Activated naive CD4-positive, alpha-beta T cell treated with anti-CD3 and anti-CD28 coated beads for 36 hours (primary cell): ENCODE measurements at regions of chr6 and their contacts with region 1.

Region 1: DNA sequence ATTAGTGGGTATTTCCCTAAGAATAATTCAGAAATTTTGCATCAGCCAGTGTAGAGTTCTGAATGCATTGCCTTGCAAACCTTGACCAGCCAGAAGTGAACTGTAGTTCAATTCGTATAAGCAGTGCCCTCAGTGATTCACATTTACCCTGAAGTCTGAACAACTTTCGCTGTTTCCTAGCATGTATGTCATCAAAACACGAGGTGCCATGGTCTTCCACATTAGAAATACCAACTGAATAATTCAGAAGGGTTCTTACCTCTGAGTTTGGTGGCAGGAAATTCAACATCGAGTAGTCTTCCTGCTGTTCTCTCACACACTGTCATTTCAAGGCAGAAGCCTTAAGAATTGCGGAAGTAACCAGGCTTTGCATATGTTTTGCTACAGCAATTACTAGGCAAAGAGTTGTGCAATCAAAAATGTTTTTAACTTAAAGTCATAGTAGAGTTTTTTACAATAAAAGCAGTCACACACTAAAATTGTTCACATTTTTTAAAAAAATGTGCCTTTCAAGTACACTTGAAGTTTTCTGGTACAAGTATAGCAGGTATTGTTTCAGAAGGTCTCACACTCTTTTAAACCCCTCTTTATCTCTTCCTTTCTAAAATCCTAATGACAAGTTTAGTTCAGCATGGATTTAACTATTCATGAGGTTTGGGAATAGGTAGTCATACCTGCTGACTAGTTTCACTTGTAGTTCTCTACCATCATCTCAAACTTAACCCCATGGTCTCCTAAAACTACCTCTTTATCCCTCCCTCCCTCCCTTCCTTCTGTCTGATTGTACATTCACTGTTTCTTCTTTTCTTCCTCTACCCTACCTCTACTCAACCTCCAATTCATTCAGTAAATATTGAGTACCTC is 118.3 kb downstream of the STXBP5 start:
- DNase-seq: peak; percentile 60
- H3K4me3 Mint-ChIP-seq: peak overlapping the region; percentile 71
- H3K27ac Mint-ChIP-seq: peak overlapping the region; percentile 92
- H3K4me1 Mint-ChIP-seq: peaks cover 19% of the 10 kb centered on the region
- H3K27me3 Mint-ChIP-seq: no peaks in the 10 kb centered on the region

Region 2: GRCh38 chr6:145734486-145735355 is 1587.8 kb before region 1 on chr6:
- CTCF ChIA-PET with region 1: no interaction called
- intact Hi-C with region 1: loop called (anchors 1 kb)
- DNase-seq: peak; percentile 75
- H3K4me3 Mint-ChIP-seq: peak overlapping the region; percentile 94
- H3K27ac Mint-ChIP-seq: peak overlapping the region; percentile 97
- H3K4me1 Mint-ChIP-seq: peaks cover 21% of the 10 kb centered on the region
- H3K27me3 Mint-ChIP-seq: no peaks in the 10 kb centered on the region

Region 3: GRCh38 chr6:146950351-146950835 is 372.1 kb before region 1 on chr6:
- CTCF ChIA-PET with region 1: interaction called, 3 read pairs
- intact Hi-C with region 1: loop called (anchors 1 kb)
- DNase-seq: peak; percentile 65
- H3K4me3 Mint-ChIP-seq: no peak overlapping the region
- H3K27ac Mint-ChIP-seq: peak overlapping the region; percentile 88
- H3K4me1 Mint-ChIP-seq: peaks cover 17% of the 10 kb centered on the region
- H3K27me3 Mint-ChIP-seq: no peaks in the 10 kb centered on the region

Region 4: GRCh38 chr6:147063469-147064031 is 259.0 kb before region 1 on chr6:
- CTCF ChIA-PET with region 1: no interaction called
- intact Hi-C with region 1: no loop called
- DNase-seq: no peak
- H3K4me3 Mint-ChIP-seq: no peak overlapping the region
- H3K27ac Mint-ChIP-seq: no peak overlapping the region
- H3K4me1 Mint-ChIP-seq: peaks cover 6% of the 10 kb centered on the region
- H3K27me3 Mint-ChIP-seq: no peaks in the 10 kb centered on the region

Region 5: DNA sequence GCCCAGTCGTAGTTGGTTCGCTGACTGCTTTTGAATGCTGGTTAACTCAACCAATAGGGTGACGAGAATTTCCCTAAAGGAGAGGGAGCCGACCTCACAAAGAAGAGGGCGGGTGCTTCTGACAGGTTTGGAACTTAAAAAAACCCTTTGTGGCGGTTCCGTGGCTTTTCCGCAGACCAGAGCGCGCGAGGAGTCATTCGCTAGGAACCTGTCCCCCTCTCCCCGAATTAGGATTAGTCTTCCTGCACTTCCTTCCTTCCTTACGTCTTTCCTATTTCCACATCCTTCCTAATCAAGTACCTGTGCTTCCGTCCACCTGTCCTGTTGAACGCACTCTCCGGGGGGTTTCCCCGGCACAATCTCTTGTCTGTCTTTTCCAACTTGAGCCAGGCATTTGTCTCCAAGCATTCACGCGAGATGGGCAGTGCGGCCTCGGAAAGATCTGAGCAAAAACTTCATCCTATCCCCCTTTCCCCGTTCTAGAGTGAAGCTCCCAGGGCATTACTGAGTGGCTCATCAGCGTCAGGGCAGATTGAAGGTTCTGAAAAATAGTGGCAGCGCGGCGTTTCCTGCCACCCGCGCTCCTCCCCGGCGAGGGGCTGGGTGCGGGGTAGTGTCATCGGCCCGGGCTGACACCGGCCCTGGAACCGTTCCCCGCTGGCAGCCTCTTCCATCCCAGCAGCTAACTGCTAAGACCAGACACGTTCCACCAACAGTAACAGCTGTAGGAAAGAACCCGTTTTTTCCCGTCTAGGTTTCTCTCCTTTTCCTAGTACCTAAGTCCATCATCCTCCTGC is 119.8 kb before region 1 on chr6:
- CTCF ChIA-PET with region 1: no interaction called
- intact Hi-C with region 1: loop called (anchors 1 kb)
- DNase-seq: peak; percentile 88
- H3K4me3 Mint-ChIP-seq: peak overlapping the region; percentile 83
- H3K27ac Mint-ChIP-seq: peak overlapping the region; percentile 99
- H3K4me1 Mint-ChIP-seq: peaks cover 20% of the 10 kb centered on the region
- H3K27me3 Mint-ChIP-seq: no peaks in the 10 kb centered on the region

Region 6: DNA sequence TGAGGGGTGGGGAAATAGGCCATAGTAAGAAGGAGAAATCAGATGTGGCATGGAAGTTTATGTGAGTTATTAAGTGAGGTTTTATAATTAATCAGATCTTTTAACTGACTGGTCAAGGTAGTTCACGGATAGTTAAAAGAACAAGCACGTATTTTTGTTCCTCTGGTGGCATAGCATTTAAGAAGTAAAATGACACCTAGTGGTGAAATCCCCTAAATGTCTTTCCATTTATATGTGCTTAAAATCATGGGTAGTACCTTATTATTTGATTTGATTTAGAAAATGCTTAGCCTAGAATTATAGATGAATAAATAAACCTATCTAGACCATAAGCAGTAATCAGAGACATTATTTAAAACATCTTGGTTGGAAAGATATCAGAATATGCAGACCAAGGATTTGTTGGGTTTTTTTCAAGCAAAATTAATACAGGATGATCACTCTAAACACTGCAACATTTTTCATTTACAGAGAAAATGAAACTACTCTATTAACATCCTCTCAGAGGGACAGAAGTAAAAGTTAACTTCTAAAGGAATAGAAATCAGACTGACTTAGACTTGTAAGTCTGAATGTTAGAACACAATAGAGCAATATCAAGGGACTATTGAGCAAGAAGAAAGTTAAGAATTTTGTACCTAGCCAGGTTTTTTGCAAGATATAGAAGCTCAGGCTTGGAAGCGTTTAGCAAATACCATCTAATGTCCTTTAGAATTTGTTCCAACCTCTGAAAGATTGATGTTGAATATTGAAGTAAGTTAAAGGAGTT is 37.3 kb before region 1 on chr6:
- CTCF ChIA-PET with region 1: no interaction called
- intact Hi-C with region 1: loop called (anchors 1 kb)
- DNase-seq: no peak
- H3K4me3 Mint-ChIP-seq: no peak overlapping the region
- H3K27ac Mint-ChIP-seq: no peak overlapping the region
- H3K4me1 Mint-ChIP-seq: peaks cover 34% of the 10 kb centered on the region
- H3K27me3 Mint-ChIP-seq: no peaks in the 10 kb centered on the region

Region 7: GRCh38 chr6:148203970-148204369 is 881.4 kb after region 1 on chr6:
- CTCF ChIA-PET with region 1: no interaction called
- intact Hi-C with region 1: loop called (anchors 1 kb)
- DNase-seq: peak; percentile 87
- H3K4me3 Mint-ChIP-seq: peak overlapping the region; percentile 48
- H3K27ac Mint-ChIP-seq: peak overlapping the region; percentile 85
- H3K4me1 Mint-ChIP-seq: peaks cover 50% of the 10 kb centered on the region
- H3K27me3 Mint-ChIP-seq: peaks cover 72% of the 10 kb centered on the region

Region 8: DNA sequence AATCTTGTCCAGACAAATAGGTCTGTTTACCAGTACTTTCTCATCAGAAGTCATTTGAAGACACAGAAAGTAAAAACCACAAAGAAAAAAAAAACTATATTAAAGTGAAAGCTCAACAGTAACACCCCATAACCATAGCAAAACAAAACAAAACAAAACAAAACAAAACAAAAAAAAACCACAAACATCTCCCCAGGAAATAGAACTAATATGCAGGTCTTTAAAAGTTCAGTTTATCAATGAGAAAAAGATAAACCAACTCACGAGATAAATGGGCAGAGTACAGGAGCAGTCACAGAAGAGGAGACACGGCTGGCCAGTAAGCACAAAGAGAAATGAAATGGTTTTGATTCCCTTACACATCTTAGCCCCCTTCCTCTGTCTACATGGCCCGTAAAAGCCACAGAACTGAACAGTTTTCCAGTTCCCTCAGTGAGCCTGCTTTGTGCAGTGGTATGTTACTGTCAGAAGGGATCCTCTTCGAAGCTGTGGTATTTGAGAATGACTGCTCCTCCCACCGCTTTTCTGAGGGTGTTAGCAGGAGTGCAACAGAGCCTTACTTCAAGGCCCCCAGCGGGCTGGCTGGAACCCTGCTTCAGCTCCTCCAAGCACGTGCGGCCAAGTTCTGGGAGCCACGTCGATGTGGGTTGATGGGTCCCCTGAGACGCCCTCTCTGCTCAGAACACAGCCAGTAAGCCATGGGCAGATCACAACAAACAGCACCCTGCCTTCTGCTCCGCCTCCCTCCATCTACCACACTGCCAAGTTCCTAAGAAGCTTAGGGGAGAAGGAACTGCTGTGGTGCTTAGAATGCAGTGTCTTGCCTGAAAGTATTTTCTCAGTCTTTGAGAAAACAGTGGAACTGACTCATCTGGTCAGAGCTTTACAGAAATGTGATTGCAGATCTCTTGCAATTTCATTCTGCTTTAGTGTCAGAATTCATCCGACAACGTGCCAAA is 1438.3 kb after region 1 on chr6:
- CTCF ChIA-PET with region 1: no interaction called
- intact Hi-C with region 1: loop called (anchors 2 kb)
- DNase-seq: peak; percentile 41
- H3K4me3 Mint-ChIP-seq: peak overlapping the region; percentile 30
- H3K27ac Mint-ChIP-seq: peak overlapping the region; percentile 65
- H3K4me1 Mint-ChIP-seq: peaks cover 37% of the 10 kb centered on the region
- H3K27me3 Mint-ChIP-seq: peaks cover 37% of the 10 kb centered on the region